ENCODE measurements at regions of chr4 and their contacts with region 1.

Region 1: GRCh38 chr4:82462415-82462831 is 32.0 kb downstream of the ENOPH1 start:
- DNase-seq: peak; percentile 94 to 97
- H3K4me3 ChIP-seq: no peak overlapping the region
- CTCF ChIP-seq: no peak
- POLR2A ChIP-seq: no peak

Region 2: GRCh38 chr4:82739316-82740179 is 277.1 kb after region 1 on chr4:
- intact Hi-C with region 1: loop called (anchors 10 kb)
- DNase-seq: peak; percentile 46 to 91
- H3K4me3 ChIP-seq: no peak overlapping the region
- CTCF ChIP-seq: peak in 1 of 3 donors; percentile 84
- POLR2A ChIP-seq: no peak

Measured in lower leg skin (tissue), 4 donors.